AG04449 (cell line): ENCODE measurements at regions of chr3 and their contacts with region 1.

Region 1: GRCh38 chr3:121545574-121546455 is at the start of gene POLQ:
- DNase-seq: peak; percentile 64
- H3K4me3 ChIP-seq: peak within 1 kb of the TSS; percentile 77
- CTCF ChIP-seq: no peak

Region 2: GRCh38 chr3:121529308-121529707 is 16.5 kb before region 1 on chr3:
- CTCF ChIA-PET with region 1: interaction called, 21 read pairs
- POLR2A ChIA-PET with region 1: no interaction called
- DNase-seq: no peak
- H3K4me3 ChIP-seq: no peak overlapping the region
- CTCF ChIP-seq: peak; percentile 53

Region 3: DNA sequence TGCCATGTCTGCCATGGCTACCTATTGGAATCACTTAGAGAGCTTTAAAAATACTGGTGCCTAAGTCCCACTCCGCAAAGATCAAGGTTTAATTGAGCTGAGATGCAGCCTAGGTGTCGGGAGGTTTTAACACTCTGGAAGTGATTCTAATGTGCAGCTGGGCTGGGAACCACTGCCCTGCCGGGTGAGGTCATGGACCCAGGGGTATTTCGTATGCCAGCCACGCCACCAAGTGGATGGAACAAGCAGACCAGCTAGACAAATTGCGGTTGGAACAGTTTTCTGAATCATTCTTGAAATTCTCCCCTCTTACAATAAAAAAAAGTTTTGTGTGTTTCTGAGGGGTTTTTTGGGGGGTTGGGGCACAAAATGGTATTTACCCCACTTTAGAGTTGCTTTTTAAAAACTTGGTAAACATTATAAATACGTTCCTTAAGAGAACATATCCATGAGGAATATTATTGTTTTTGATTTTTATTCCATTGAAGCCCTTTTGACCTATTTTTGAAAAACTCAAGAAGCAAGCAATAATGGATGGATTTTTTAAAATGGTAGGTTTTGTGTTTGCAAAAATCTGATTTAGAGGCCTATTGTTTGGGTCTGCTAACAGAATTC is 713.0 kb after region 1 on chr3:
- CTCF ChIA-PET with region 1: interaction called, 19 read pairs
- POLR2A ChIA-PET with region 1: no interaction called
- DNase-seq: peak; percentile 2
- H3K4me3 ChIP-seq: no peak overlapping the region
- CTCF ChIP-seq: peak; percentile 54

Region 4: DNA sequence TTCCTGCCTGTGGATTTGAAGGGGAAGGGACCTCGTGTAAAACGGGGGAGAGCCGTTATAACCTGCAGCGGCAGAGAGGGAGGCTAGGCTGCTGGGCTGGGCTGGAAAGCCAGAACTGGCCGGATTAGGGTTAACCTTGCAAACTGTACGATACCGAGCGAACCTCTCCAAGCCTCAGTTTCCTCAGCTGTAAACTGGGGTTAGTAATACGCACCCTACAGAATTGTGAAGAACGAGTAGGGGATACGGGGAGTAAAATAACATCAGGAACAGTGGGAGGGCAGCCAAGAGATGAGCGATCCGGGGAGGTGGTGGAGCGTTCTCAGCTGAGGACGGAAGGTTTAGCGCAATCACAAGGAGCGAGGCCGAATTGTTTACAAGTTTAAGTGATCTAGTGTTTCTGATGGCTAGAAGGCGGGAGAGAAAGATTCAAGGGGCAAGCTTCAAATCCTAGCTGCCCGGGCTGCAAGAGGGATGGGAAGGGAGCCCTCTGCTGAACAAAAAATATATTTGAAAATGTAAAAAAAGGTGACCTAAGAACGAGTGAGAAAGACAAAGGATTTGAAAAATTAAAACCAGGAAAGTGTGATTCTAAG is 1482.5 kb after region 1 on chr3:
- CTCF ChIA-PET with region 1: interaction called, 21 read pairs
- POLR2A ChIA-PET with region 1: no interaction called
- DNase-seq: peak; percentile 28
- H3K4me3 ChIP-seq: peak overlapping the region; percentile 45
- CTCF ChIP-seq: peak; percentile 31